ENCODE measurements at regions of chr1 and their contacts with region 1.

Region 1: GRCh38 chr1:43414634-43415223 is 25.0 kb downstream of the SZT2 start:
- DNase-seq: peak; percentile 73
- ATAC-seq: peak; percentile 93
- H3K4me3 Mint-ChIP-seq: no peak overlapping the region
- H3K27ac Mint-ChIP-seq: no peak overlapping the region
- H3K4me1 Mint-ChIP-seq: no peaks in the 10 kb centered on the region
- H3K27me3 Mint-ChIP-seq: no peaks in the 10 kb centered on the region

Region 2: GRCh38 chr1:43227143-43227764 is 187.5 kb before region 1 on chr1:
- CTCF ChIA-PET with region 1: interaction called, 60 read pairs
- POLR2A ChIA-PET with region 1: interaction called, 3 read pairs
- intact Hi-C with region 1: loop called (anchors 1 kb)
- DNase-seq: peak; percentile 92
- ATAC-seq: peak; percentile 93
- H3K4me3 Mint-ChIP-seq: no peak overlapping the region
- H3K27ac Mint-ChIP-seq: no peak overlapping the region
- H3K4me1 Mint-ChIP-seq: no peaks in the 10 kb centered on the region
- H3K27me3 Mint-ChIP-seq: peaks cover 2% of the 10 kb centered on the region

Region 3: GRCh38 chr1:43238085-43238484 is 176.6 kb before region 1 on chr1:
- CTCF ChIA-PET with region 1: interaction called, 13 read pairs
- POLR2A ChIA-PET with region 1: no interaction called
- intact Hi-C with region 1: loop called in 1 of 2 experiments (anchors 1 kb)
- DNase-seq: peak; percentile 68
- ATAC-seq: peak; percentile 77
- H3K4me3 Mint-ChIP-seq: no peak overlapping the region
- H3K27ac Mint-ChIP-seq: no peak overlapping the region
- H3K4me1 Mint-ChIP-seq: no peaks in the 10 kb centered on the region
- H3K27me3 Mint-ChIP-seq: no peaks in the 10 kb centered on the region

Measured in activated CD4-positive, alpha-beta T cell treated with anti-CD3 and anti-CD28 coated beads for 36 hours (primary cell).